Breast epithelium (tissue), 4 donors: ENCODE measurements at regions of chr5 and their contacts with region 1.

Region 1: GRCh38 chr5:116479776-116480675 is 94.6 kb downstream of the SEMA6A start:
- DNase-seq: no peak
- H3K4me3 ChIP-seq: no peak overlapping the region
- H3K27ac ChIP-seq: no peak overlapping the region
- H3K4me1 ChIP-seq: no peaks in the 10 kb centered on the region
- H3K27me3 ChIP-seq: no peaks in the 10 kb centered on the region
- CTCF ChIP-seq: no peak
- POLR2A ChIP-seq: no peak

Region 2: DNA sequence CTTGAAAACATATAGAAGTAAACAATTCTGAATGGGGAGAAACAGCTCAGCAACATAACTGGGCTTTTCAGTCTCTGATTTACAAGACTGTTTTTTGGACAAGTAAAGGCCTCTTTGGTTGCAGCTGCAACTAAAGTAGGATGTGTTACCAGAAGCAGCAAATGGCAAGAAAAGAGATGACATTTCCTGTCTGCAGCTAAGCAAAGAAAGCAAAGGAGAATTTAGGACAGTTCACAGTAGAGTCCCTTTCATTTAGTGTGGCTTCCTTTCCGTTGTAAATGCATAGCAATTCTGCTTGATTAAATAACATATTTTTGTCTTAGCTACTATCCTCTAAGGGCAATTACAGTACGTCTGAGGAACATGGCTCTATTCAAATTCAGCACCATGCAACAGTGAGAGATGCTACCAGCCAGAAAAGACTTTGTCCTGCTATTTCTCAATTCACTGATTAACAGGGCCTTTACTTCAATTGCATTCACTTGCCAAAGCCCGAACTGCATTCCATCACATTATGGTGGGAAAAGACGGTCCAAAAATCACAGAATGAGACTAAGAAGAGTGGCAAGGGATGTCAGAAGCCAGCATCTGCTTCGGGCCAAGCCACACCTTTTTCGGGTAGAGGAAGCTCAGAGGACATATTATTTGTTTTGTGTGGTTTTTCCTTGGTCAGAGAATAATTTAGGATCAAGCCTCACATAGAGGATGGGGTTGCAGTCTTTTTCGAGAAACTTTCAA is 13.1 kb before region 1 on chr5:
- intact Hi-C with region 1: loop called (anchors 1 kb)
- DNase-seq: no peak
- H3K4me3 ChIP-seq: no peak overlapping the region
- H3K27ac ChIP-seq: no peak overlapping the region
- H3K4me1 ChIP-seq: no peaks in the 10 kb centered on the region
- H3K27me3 ChIP-seq: no peaks in the 10 kb centered on the region
- CTCF ChIP-seq: no peak
- POLR2A ChIP-seq: no peak

Region 3: GRCh38 chr5:117201001-117201400 is 721.0 kb after region 1 on chr5:
- intact Hi-C with region 1: loop called (anchors 10 kb)
- DNase-seq: no peak
- H3K4me3 ChIP-seq: no peak overlapping the region
- H3K27ac ChIP-seq: no peak overlapping the region
- H3K4me1 ChIP-seq: no peaks in the 10 kb centered on the region
- H3K27me3 ChIP-seq: no peaks in the 10 kb centered on the region
- CTCF ChIP-seq: no peak
- POLR2A ChIP-seq: no peak